Stomach (tissue), 19 donors: ENCODE measurements at regions of chr6 and their contacts with region 1.

Region 1: GRCh38 chr6:168117942-168118341 is 38.9 kb upstream of the FRMD1 start:
- DNase-seq: no peak
- H3K4me3 ChIP-seq: no peak overlapping the region
- H3K27ac ChIP-seq: no peak overlapping the region
- H3K4me1 ChIP-seq: peaks cover 0 to 3% (median 0%) of the 10 kb centered on the region in 4 donors
- H3K27me3 ChIP-seq: no peaks in the 10 kb centered on the region
- CTCF ChIP-seq: peak in 1 of 7 experiments; percentile 36
- EP300 ChIP-seq: no peak
- POLR2A ChIP-seq: no peak

Region 2: DNA sequence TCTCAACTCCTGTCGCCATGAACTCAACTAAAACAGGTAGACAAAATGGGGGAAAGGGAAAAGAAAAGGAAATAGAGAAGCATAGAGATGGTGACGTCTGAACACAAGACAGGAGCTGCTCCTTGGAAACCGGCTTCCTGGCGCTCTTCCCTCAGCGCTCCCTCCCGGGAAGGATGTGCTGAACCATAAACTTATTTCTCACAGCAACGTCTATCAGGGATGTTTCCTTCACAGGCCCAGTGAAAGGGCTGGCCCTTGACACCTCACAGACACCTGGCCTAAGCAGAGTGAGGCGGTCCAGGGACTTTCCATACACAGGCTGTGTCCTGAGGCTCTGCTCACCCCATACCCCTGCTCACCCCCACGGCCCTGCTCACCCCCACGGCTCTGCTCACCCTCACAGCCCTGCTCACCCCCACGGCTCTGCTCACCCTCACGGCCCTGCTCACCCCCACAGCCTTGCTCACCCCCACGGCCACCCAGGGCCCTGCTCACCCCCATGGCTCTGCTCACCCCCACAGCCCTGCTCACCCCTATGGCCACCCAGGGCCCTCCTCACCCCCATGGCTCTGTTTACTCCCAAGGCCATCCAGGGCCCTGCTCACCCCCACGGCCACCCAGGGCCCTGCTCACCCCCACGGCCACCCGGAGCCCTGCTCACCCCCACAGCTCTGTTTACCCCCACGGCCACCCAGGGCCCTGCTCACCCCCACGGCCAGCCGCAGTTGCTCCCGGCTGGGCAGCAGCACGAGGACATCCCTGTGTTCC is 39.6 kb before region 1 on chr6:
- intact Hi-C with region 1: loop called (anchors 5 kb)
- DNase-seq: peak in 1 of 2 donors; percentile 62
- H3K4me3 ChIP-seq: no peak overlapping the region
- H3K27ac ChIP-seq: no peak overlapping the region
- H3K4me1 ChIP-seq: peaks cover 7 to 13% (median 12%) of the 10 kb centered on the region in 4 donors
- H3K27me3 ChIP-seq: no peaks in the 10 kb centered on the region
- CTCF ChIP-seq: no peak
- EP300 ChIP-seq: no peak
- POLR2A ChIP-seq: no peak